Transverse colon (tissue), 4 donors: ENCODE measurements at regions of chr4 and their contacts with region 1.

Region 1: DNA sequence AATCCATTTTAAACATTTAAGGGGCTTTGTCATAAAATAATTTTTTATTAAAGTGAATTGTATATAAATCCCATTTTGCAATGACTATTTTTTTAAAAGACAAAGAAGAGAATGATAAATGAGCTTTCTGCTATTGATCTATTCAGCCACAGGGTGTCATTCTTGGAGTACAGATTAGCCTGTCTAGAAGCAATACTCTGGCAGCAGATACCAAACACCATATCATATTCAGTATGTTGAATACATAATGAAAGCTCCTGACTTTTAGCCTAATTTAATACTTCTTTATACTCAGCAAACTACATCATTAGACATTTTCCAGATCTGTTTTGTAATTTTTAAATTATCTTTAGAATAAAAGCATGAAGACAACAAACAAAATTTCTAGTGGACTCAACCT is 496.3 kb downstream of the PDGFC start:
- DNase-seq: no peak
- H3K4me3 ChIP-seq: no peak overlapping the region
- H3K27ac ChIP-seq: no peak overlapping the region
- H3K4me1 ChIP-seq: no peaks in the 10 kb centered on the region
- H3K27me3 ChIP-seq: no peaks in the 10 kb centered on the region
- CTCF ChIP-seq: peak; percentile 32 to 54 (median 35)
- EP300 ChIP-seq: no peak
- POLR2A ChIP-seq: no peak

Region 2: GRCh38 chr4:156442912-156443311 is 32.4 kb before region 1 on chr4:
- in situ Hi-C with region 1: no loop called
- intact Hi-C with region 1: no loop called
- DNase-seq: no peak
- H3K4me3 ChIP-seq: no peak overlapping the region
- H3K27ac ChIP-seq: no peak overlapping the region
- H3K4me1 ChIP-seq: no peaks in the 10 kb centered on the region
- H3K27me3 ChIP-seq: no peaks in the 10 kb centered on the region
- CTCF ChIP-seq: no peak
- EP300 ChIP-seq: no peak
- POLR2A ChIP-seq: no peak

Region 3: GRCh38 chr4:157045507-157046127 is 570.3 kb after region 1 on chr4:
- in situ Hi-C with region 1: loop called in 1 of 4 experiments (anchors 10 kb)
- intact Hi-C with region 1: no loop called
- DNase-seq: peak; percentile 9
- H3K4me3 ChIP-seq: no peak overlapping the region
- H3K27ac ChIP-seq: no peak overlapping the region
- H3K4me1 ChIP-seq: no peaks in the 10 kb centered on the region
- H3K27me3 ChIP-seq: no peaks in the 10 kb centered on the region
- CTCF ChIP-seq: peak; percentile 58 to 69 (median 60)
- EP300 ChIP-seq: no peak
- POLR2A ChIP-seq: no peak